CD8-positive, alpha-beta T cell (primary cell): ENCODE measurements at regions of chr16 and their contacts with region 1.

Region 1: DNA sequence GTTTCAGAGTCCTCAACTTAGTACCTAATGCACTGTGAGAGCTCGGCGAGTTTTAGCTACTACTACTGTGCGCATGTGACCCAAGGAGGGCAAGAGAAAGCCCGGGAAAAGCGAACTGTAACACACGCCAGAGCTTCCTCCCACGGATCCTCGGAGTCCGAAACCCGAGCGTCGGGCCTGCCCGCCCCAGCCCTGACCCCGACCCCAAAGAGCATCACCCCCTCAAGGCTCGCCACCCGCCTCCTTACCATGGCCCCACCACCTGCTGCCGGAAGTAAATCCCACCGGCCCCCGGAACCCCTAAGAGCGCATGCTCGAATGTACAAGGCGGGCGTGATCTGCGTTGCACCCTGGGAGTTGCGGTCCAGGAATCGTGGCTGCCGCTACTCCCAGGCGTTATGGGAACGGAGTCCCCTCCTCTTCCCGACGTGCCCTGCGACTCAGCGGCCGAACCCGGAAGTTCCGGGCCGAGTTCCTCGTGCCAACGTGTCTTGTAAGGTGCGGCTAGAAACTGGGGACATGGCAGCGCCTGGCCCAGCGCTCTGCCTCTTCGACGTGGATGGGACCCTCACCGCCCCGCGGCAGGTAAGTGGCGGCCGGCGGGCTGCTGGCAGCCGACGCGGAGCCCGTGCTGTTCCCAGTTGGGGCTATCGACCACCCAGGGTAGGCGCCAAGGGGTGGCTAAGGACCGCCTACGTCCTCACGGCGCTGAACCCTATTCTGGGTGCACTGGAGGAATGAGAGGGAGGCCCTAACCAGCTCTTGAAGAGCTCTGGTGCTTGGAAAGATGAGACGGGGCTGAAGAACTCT is at the starts of genes PMM2 and TMEM186:
- DNase-seq: peak; percentile 87 to 98 (median 95)
- ATAC-seq: peak; percentile 95
- H3K4me3 ChIP-seq: peak within 1 kb of the TSS; percentile 77 to 97
- H3K4me3 Mint-ChIP-seq: peak within 1 kb of the TSS; percentile 95
- H3K27ac ChIP-seq: peak within 1 kb of the TSS; percentile 78 to 81
- H3K27ac Mint-ChIP-seq: peak within 1 kb of the TSS; percentile 93
- H3K4me1 ChIP-seq: peaks cover 34% of the 10 kb centered on the region
- H3K4me1 Mint-ChIP-seq: peaks cover 46% of the 10 kb centered on the region
- H3K27me3 ChIP-seq: no peaks in the 10 kb centered on the region
- H3K27me3 Mint-ChIP-seq: no peaks in the 10 kb centered on the region
- CTCF ChIP-seq: no peak
- total RNA-seq, gene PMM2: 29.6 to 32.7 TPM
- total RNA-seq, gene TMEM186: 2.4 to 2.9 TPM

Region 2: DNA sequence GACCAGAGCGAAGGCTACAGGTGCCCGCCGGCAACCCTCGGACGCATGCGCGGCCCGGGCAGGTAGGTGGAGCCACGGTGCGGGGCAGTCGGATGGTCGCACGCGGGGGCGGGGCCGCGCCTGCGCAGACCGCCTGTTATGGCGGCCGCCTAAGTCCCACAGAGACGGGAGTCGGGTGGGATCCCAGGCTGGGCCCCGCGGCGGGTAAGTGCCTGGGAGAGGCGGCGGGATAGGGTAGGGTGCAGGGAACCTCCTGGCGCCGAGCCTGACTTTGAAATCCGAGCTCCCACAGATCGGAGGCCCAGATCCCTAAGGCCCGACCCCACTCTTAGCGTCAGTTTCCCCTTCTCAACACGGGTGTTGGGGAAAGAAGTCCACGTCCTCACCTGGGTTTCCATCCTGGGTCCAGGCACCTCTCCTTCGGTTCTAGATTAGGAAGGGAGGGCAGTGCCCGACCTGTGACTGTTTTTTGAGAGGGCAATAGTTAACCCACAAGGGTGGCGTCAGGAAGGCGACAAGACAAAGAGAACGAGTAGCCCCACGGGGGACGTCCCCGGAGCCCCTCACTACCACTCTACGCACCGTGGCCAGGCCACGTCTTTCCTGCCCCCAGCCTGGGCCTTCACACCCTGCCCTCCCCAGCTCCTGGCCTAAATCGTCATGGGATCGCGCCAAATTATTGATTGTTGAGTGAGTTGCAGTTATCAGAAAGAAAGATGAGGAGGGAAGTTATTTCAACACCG is 175.8 kb before region 1 on chr16 and contains the start of gene METTL22:
- CTCF ChIA-PET with region 1: no interaction called
- POLR2A ChIA-PET with region 1: no interaction called
- intact Hi-C with region 1: loop called (anchors 2 to 5 kb)
- DNase-seq: peak; percentile 83 to 96 (median 91)
- ATAC-seq: peak; percentile 98
- H3K4me3 ChIP-seq: peak within 1 kb of the TSS; percentile 90 to 100
- H3K4me3 Mint-ChIP-seq: peak within 1 kb of the TSS; percentile 94
- H3K27ac ChIP-seq: peak within 1 kb of the TSS; percentile 83 to 84
- H3K27ac Mint-ChIP-seq: peak within 1 kb of the TSS; percentile 92
- H3K4me1 ChIP-seq: peaks cover 11% of the 10 kb centered on the region
- H3K4me1 Mint-ChIP-seq: peaks cover 20% of the 10 kb centered on the region
- H3K27me3 ChIP-seq: no peaks in the 10 kb centered on the region
- H3K27me3 Mint-ChIP-seq: no peaks in the 10 kb centered on the region
- CTCF ChIP-seq: no peak
- total RNA-seq, gene METTL22: 30.0 to 30.8 TPM

Region 3: DNA sequence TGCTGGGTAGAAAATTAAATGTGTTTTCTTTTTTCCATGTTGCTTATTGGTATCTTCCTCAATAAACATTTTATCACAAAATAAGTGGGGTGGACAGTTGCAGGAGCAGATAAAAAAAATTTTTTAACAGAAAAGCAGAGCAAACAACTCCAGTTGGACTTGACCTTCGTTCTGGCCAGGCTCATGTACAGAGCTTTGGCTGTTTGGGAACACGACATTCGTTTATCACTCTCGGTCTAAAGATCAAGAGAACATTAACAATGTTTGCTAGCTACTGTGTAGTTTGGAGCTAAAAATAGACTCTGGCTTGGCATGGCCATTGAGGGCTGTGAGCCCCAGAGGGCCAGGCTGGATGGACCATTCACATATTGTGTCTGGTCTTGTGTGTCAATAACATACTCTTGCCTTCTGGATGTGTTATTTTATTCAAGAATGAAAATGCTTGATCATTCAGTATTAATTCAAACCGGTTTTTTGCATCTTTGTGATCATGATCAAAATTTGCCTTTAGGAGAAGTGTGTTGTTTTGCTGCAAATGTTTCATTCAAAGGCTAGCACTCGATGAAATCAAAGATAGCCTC is 56.7 kb before region 1 on chr16:
- CTCF ChIA-PET with region 1: no interaction called
- POLR2A ChIA-PET with region 1: no interaction called
- intact Hi-C with region 1: no loop called
- DNase-seq: no peak
- ATAC-seq: no peak
- H3K4me3 ChIP-seq: no peak overlapping the region
- H3K4me3 Mint-ChIP-seq: no peak overlapping the region
- H3K27ac ChIP-seq: no peak overlapping the region
- H3K27ac Mint-ChIP-seq: no peak overlapping the region
- H3K4me1 ChIP-seq: no peaks in the 10 kb centered on the region
- H3K4me1 Mint-ChIP-seq: no peaks in the 10 kb centered on the region
- H3K27me3 ChIP-seq: no peaks in the 10 kb centered on the region
- H3K27me3 Mint-ChIP-seq: no peaks in the 10 kb centered on the region
- CTCF ChIP-seq: no peak

Region 4: DNA sequence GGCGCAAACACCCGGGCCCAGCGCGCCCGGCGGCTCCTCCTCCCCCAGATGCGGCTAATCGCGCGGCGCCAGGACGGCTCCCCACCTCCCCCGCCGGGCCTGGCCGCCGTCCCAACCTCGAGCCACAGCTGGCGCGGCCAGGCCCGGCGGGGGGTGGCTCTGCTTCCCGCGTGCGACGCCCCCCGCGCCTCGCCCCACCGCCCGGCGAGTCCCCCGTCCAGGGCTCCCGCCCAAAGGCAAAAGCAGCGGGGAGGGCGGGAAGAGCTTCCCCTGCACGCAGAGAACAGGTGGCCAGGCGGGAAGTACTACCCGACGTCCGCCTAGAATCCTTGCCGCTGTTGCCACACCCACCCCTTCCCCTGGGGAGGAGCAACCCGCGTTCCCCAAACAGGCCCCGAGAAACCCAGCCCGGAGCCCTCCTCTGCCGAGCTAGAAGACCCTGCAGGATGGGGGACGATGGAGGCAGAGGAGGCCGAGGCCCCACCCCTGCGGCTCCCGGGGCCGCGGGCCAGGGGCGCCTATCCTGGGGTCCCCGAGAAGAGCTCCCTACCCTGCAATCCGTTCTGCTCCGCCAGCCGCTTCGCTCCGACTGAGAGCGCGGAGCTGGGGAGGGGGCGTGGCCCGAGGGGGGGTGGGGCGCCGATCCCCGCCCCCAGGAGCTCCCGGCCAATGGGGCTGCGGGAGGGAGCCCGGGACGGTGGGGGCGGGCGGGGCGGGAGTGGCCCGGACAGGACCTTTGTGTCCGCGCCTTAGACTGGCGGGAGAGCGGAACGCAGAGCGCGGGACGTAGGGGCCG is 71.0 kb after region 1 on chr16 and contains the start of gene CARHSP1:
- CTCF ChIA-PET with region 1: no interaction called
- POLR2A ChIA-PET with region 1: interaction called, 8 read pairs
- intact Hi-C with region 1: loop called (anchors 1 to 2 kb)
- DNase-seq: peak; percentile 55 to 90 (median 75)
- ATAC-seq: peak; percentile 76
- H3K4me3 ChIP-seq: peak within 1 kb of the TSS; percentile 68 to 72
- H3K4me3 Mint-ChIP-seq: peak within 1 kb of the TSS; percentile 97
- H3K27ac ChIP-seq: peak within 1 kb of the TSS; percentile 41 to 52
- H3K27ac Mint-ChIP-seq: peak within 1 kb of the TSS; percentile 93
- H3K4me1 ChIP-seq: peaks cover 53% of the 10 kb centered on the region
- H3K4me1 Mint-ChIP-seq: peaks cover 57% of the 10 kb centered on the region
- H3K27me3 ChIP-seq: no peaks in the 10 kb centered on the region
- H3K27me3 Mint-ChIP-seq: no peaks in the 10 kb centered on the region
- CTCF ChIP-seq: no peak
- total RNA-seq, gene CARHSP1: 28.0 to 33.3 TPM

Region 5: DNA sequence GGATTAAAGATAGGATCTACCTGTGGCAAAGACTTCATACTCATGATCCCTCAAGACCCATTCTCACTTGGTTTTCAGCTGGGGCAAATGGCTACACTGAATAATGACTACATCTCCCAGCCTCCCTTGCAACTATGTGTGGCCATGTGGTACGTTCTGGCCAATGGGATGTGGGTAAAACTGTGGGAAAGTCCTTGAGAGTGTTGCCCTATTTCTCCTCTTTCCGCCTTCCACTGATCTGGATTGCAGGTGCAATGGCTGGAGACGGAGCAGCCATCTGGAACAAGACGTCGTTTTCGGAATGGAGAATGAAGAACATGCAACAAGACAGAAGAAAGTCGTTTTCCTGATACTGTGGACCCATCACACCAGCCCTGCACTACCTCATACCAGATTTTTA is 342.4 kb after region 1 on chr16:
- CTCF ChIA-PET with region 1: no interaction called
- POLR2A ChIA-PET with region 1: no interaction called
- intact Hi-C with region 1: loop called in 1 of 2 experiments (anchors 5 kb)
- DNase-seq: peak in 2 of 9 experiments; percentile 35 to 52
- ATAC-seq: peak; percentile 35
- H3K4me3 ChIP-seq: no peak overlapping the region
- H3K4me3 Mint-ChIP-seq: no peak overlapping the region
- H3K27ac ChIP-seq: no peak overlapping the region
- H3K27ac Mint-ChIP-seq: no peak overlapping the region
- H3K4me1 ChIP-seq: peaks cover 13% of the 10 kb centered on the region
- H3K4me1 Mint-ChIP-seq: peaks cover 17% of the 10 kb centered on the region
- H3K27me3 ChIP-seq: no peaks in the 10 kb centered on the region
- H3K27me3 Mint-ChIP-seq: no peaks in the 10 kb centered on the region
- CTCF ChIP-seq: no peak